ENCODE measurements at regions of chr2 and their contacts with region 1.

Region 1: GRCh38 chr2:30208452-30208851 is 22.9 kb upstream of the LBH start:
- DNase-seq: peak; percentile 72 to 80
- H3K4me3 ChIP-seq: no peak overlapping the region
- H3K4me1 ChIP-seq: no peaks in the 10 kb centered on the region
- H3K27me3 ChIP-seq: no peaks in the 10 kb centered on the region

Region 2: DNA sequence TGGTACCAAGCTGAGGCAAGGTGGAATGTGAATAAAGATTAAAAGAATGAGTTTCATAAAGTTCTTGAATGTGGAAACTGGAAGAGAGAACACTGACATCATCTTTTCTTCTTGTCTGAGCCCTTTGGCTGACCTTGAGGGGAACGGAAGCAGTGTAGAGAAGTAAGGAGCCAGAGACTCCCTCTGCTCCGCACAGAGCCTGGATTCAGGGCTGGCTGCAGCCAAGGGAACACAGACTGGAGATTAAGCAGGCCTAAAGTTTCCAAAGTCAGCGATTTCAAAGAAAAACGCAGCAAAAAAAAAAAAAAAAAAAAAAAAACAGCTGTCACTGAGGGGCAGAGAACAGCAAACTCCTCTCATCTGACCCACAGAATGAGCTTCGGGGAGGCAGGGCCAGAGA is 267.7 kb before region 1 on chr2:
- in situ Hi-C with region 1: no loop called
- DNase-seq: no peak
- H3K4me3 ChIP-seq: no peak overlapping the region
- H3K4me1 ChIP-seq: no peaks in the 10 kb centered on the region
- H3K27me3 ChIP-seq: no peaks in the 10 kb centered on the region

Region 3: GRCh38 chr2:30706534-30707304 is 498.3 kb after region 1 on chr2:
- in situ Hi-C with region 1: loop called (anchors 5 kb)
- DNase-seq: peak; percentile 72 to 87
- H3K4me3 ChIP-seq: no peak overlapping the region
- H3K4me1 ChIP-seq: peaks cover 9% of the 10 kb centered on the region
- H3K27me3 ChIP-seq: no peaks in the 10 kb centered on the region

Measured in HAP-1 (cell line).